ENCODE measurements at regions of chr5 and their contacts with region 1.

Region 1: GRCh38 chr5:140372971-140373487 is 13.0 kb downstream of the SLC4A9 start:
- DNase-seq: peak; percentile 70 to 78
- H3K4me3 ChIP-seq: no peak overlapping the region
- H3K27ac ChIP-seq: no peak overlapping the region
- H3K4me1 ChIP-seq: peaks cover 0 to 5% of the 10 kb centered on the region in 2 donors
- H3K27me3 ChIP-seq: no peaks in the 10 kb centered on the region
- CTCF ChIP-seq: peak; percentile 50 to 86 (median 75)
- POLR2A ChIP-seq: no peak

Region 2: GRCh38 chr5:140639148-140639979 is 266.3 kb after region 1 on chr5 and contains the start of gene TMCO6:
- intact Hi-C with region 1: loop called (anchors 10 kb)
- DNase-seq: peak; percentile 98 to 99
- H3K4me3 ChIP-seq: peak within 1 kb of the TSS; percentile 63 to 80 (median 66)
- H3K27ac ChIP-seq: peak within 1 kb of the TSS; percentile 89 to 94 (median 89)
- H3K4me1 ChIP-seq: peaks cover 11 to 13% of the 10 kb centered on the region in 2 donors
- H3K27me3 ChIP-seq: no peaks in the 10 kb centered on the region
- CTCF ChIP-seq: peak in 5 of 6 experiments; percentile 27 to 83 (median 65)
- POLR2A ChIP-seq: peak; percentile 42 to 70
- total RNA-seq, gene TMCO6: 16.1 to 48.7 (median 29.3) TPM

Region 3: DNA sequence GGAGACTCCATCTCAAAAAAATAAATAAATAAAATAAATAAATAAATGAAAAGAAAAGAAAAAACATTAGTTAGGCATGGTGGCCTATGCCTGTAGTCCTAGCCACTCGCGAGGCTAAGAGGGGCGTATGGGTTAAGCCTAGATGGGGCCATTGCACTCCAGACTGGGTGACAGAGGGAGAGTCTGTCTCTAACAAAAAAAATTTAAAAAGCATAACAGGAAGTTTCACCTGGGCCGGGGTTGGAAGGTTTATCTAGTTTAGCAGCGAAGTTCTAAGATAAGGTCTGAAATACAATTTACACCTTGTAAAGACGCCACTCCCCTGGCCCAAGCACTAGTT is 345.2 kb after region 1 on chr5:
- intact Hi-C with region 1: loop called (anchors 5 kb)
- DNase-seq: no peak
- H3K4me3 ChIP-seq: no peak overlapping the region
- H3K27ac ChIP-seq: no peak overlapping the region
- H3K4me1 ChIP-seq: no peaks in the 10 kb centered on the region
- H3K27me3 ChIP-seq: no peaks in the 10 kb centered on the region
- CTCF ChIP-seq: no peak
- POLR2A ChIP-seq: no peak